ENCODE measurements at regions of chr7 and their contacts with region 1.

Region 1: GRCh38 chr7:117014673-117015133 is 61.4 kb downstream of the ST7 start:
- DNase-seq: peak; percentile 38
- H3K4me3 Mint-ChIP-seq: no peak overlapping the region
- H3K27ac Mint-ChIP-seq: no peak overlapping the region
- H3K4me1 Mint-ChIP-seq: peaks cover 42% of the 10 kb centered on the region
- H3K27me3 Mint-ChIP-seq: peaks cover 3% of the 10 kb centered on the region

Region 2: GRCh38 chr7:116929914-116930913 is 84.5 kb before region 1 on chr7:
- CTCF ChIA-PET with region 1: no interaction called
- POLR2A ChIA-PET with region 1: no interaction called
- intact Hi-C with region 1: loop called (anchors 1 kb)
- DNase-seq: peak; percentile 84
- H3K4me3 Mint-ChIP-seq: no peak overlapping the region
- H3K27ac Mint-ChIP-seq: no peak overlapping the region
- H3K4me1 Mint-ChIP-seq: peaks cover 4% of the 10 kb centered on the region
- H3K27me3 Mint-ChIP-seq: peaks cover 3% of the 10 kb centered on the region

Region 3: GRCh38 chr7:116984917-116985316 is 29.8 kb before region 1 on chr7:
- CTCF ChIA-PET with region 1: interaction called, 123 read pairs
- POLR2A ChIA-PET with region 1: no interaction called
- intact Hi-C with region 1: loop called (anchors 1 kb)
- DNase-seq: no peak
- H3K4me3 Mint-ChIP-seq: no peak overlapping the region
- H3K27ac Mint-ChIP-seq: no peak overlapping the region
- H3K4me1 Mint-ChIP-seq: peaks cover 4% of the 10 kb centered on the region
- H3K27me3 Mint-ChIP-seq: no peaks in the 10 kb centered on the region

Region 4: GRCh38 chr7:117110480-117111337 is 96.0 kb after region 1 on chr7:
- CTCF ChIA-PET with region 1: interaction called, 4 read pairs
- POLR2A ChIA-PET with region 1: no interaction called
- intact Hi-C with region 1: loop called (anchors 1 kb)
- DNase-seq: peak; percentile 69
- H3K4me3 Mint-ChIP-seq: no peak overlapping the region
- H3K27ac Mint-ChIP-seq: peak overlapping the region; percentile 33
- H3K4me1 Mint-ChIP-seq: peaks cover 29% of the 10 kb centered on the region
- H3K27me3 Mint-ChIP-seq: no peaks in the 10 kb centered on the region

Region 5: DNA sequence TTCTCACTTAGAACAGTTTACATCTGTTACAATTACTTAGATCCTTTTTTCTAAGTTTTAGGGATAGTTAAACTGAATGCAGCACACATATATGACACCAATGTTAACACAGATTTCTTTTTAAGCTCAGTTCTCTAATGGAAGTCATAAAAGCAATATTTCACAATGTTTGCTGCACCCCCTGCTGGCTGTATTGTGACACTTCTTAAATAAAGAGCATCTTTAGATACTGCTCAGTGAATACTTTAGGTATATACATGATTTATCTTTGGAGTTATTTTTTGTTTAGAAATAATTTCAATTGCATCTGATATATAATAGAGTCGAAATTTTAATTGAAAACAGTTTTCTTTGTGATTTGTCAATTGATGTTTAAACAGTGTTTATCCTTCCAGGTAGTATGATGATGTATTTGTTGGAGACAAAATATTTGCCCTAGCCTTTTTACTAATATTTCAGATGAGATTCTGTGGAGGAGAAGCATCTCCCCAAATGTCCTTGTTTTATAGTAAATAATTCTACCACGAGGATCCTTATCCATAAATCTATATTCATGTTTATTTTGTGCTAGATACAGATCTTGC is 113.0 kb after region 1 on chr7:
- CTCF ChIA-PET with region 1: interaction called, 42 read pairs
- POLR2A ChIA-PET with region 1: interaction called, 5 read pairs
- intact Hi-C with region 1: loop called (anchors 1 kb)
- DNase-seq: peak; percentile 48
- H3K4me3 Mint-ChIP-seq: no peak overlapping the region
- H3K27ac Mint-ChIP-seq: no peak overlapping the region
- H3K4me1 Mint-ChIP-seq: peaks cover 13% of the 10 kb centered on the region
- H3K27me3 Mint-ChIP-seq: no peaks in the 10 kb centered on the region